CD8-positive, alpha-beta T cell (primary cell): ENCODE measurements at regions of chr9 and their contacts with region 1.

Region 1: GRCh38 chr9:128863647-128864046 is 18.1 kb downstream of the KYAT1 start:
- DNase-seq: peak; percentile 74 to 95 (median 86)
- ATAC-seq: peak; percentile 99
- H3K4me3 ChIP-seq: no peak overlapping the region
- H3K4me3 Mint-ChIP-seq: no peak overlapping the region
- H3K27ac ChIP-seq: no peak overlapping the region
- H3K27ac Mint-ChIP-seq: no peak overlapping the region
- H3K4me1 ChIP-seq: peaks cover 5% of the 10 kb centered on the region
- H3K4me1 Mint-ChIP-seq: peaks cover 5% of the 10 kb centered on the region
- H3K27me3 ChIP-seq: no peaks in the 10 kb centered on the region
- H3K27me3 Mint-ChIP-seq: no peaks in the 10 kb centered on the region
- CTCF ChIP-seq: peak; percentile 77

Region 2: DNA sequence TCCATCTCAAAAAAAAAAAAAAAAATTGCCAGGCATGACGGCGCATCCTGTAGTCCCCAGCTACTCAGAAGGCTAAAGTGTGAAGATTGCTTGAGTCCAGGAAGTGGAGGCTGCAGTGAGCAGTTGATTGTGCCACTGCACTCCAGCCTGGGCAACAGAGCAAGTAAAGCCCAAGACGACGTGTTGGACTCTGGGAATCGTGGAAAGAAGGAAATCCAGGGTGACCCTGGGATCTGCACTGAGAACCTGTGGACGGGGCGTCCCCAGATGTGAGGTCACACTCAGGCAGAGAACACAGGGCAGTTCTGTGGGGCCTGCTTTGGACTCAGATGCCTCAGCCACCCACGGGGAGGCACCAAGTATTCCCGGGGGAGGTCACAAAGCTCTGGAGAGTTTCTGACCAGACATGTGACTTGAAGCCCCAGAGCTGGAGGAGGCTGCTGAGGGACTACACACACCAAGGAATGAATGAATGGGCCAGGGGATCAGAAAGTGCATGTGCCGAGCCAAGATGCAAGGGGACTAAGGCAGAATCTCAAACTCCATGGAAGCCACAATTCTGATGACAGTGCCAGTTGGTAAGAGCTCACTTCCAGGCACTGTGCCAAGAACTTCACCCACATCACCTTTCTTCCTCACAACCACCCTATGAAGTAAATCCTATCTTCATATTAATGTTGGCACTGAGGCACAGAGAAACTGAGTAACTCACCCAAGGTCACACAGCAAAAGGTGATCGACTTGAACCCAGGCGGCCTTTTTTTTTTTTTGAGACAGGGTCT is 219.9 kb before region 1 on chr9:
- CTCF ChIA-PET with region 1: no interaction called
- POLR2A ChIA-PET with region 1: no interaction called
- intact Hi-C with region 1: loop called (anchors 1 kb)
- DNase-seq: no peak
- ATAC-seq: no peak
- H3K4me3 ChIP-seq: no peak overlapping the region
- H3K4me3 Mint-ChIP-seq: no peak overlapping the region
- H3K27ac ChIP-seq: no peak overlapping the region
- H3K27ac Mint-ChIP-seq: no peak overlapping the region
- H3K4me1 ChIP-seq: no peaks in the 10 kb centered on the region
- H3K4me1 Mint-ChIP-seq: no peaks in the 10 kb centered on the region
- H3K27me3 ChIP-seq: no peaks in the 10 kb centered on the region
- H3K27me3 Mint-ChIP-seq: no peaks in the 10 kb centered on the region
- CTCF ChIP-seq: no peak

Region 3: GRCh38 chr9:128747234-128747633 is 116.4 kb before region 1 on chr9:
- CTCF ChIA-PET with region 1: no interaction called
- POLR2A ChIA-PET with region 1: no interaction called
- intact Hi-C with region 1: no loop called
- DNase-seq: no peak
- ATAC-seq: no peak
- H3K4me3 ChIP-seq: no peak overlapping the region
- H3K4me3 Mint-ChIP-seq: no peak overlapping the region
- H3K27ac ChIP-seq: no peak overlapping the region
- H3K27ac Mint-ChIP-seq: no peak overlapping the region
- H3K4me1 ChIP-seq: no peaks in the 10 kb centered on the region
- H3K4me1 Mint-ChIP-seq: no peaks in the 10 kb centered on the region
- H3K27me3 ChIP-seq: no peaks in the 10 kb centered on the region
- H3K27me3 Mint-ChIP-seq: no peaks in the 10 kb centered on the region
- CTCF ChIP-seq: no peak

Region 4: GRCh38 chr9:128818099-128818838 is 45.4 kb before region 1 on chr9 and contains the start of gene ENDOG:
- CTCF ChIA-PET with region 1: interaction called, 3 read pairs
- POLR2A ChIA-PET with region 1: no interaction called
- intact Hi-C with region 1: loop called in 1 of 2 experiments (anchors 1 kb)
- DNase-seq: peak; percentile 94 to 98 (median 97)
- ATAC-seq: peak; percentile 96
- H3K4me3 ChIP-seq: peak within 1 kb of the TSS; percentile 59 to 75
- H3K4me3 Mint-ChIP-seq: peak within 1 kb of the TSS; percentile 91
- H3K27ac ChIP-seq: peak within 1 kb of the TSS; percentile 52 to 67
- H3K27ac Mint-ChIP-seq: peak within 1 kb of the TSS; percentile 87
- H3K4me1 ChIP-seq: peaks cover 12% of the 10 kb centered on the region
- H3K4me1 Mint-ChIP-seq: peaks cover 21% of the 10 kb centered on the region
- H3K27me3 ChIP-seq: no peaks in the 10 kb centered on the region
- H3K27me3 Mint-ChIP-seq: no peaks in the 10 kb centered on the region
- CTCF ChIP-seq: peak; percentile 98
- total RNA-seq, gene ENDOG: 6.2 to 6.4 TPM

Region 5: GRCh38 chr9:128892317-128892921 is 28.8 kb after region 1 on chr9:
- CTCF ChIA-PET with region 1: interaction called, 15 read pairs
- POLR2A ChIA-PET with region 1: interaction called, 3 read pairs
- intact Hi-C with region 1: no loop called
- DNase-seq: peak in 8 of 9 experiments; percentile 35 to 65 (median 48)
- ATAC-seq: peak; percentile 76
- H3K4me3 ChIP-seq: no peak overlapping the region
- H3K4me3 Mint-ChIP-seq: no peak overlapping the region
- H3K27ac ChIP-seq: peak overlapping the region in 1 of 2 experiments; percentile 68
- H3K27ac Mint-ChIP-seq: peak overlapping the region; percentile 45
- H3K4me1 ChIP-seq: peaks cover 54% of the 10 kb centered on the region
- H3K4me1 Mint-ChIP-seq: peaks cover 50% of the 10 kb centered on the region
- H3K27me3 ChIP-seq: no peaks in the 10 kb centered on the region
- H3K27me3 Mint-ChIP-seq: no peaks in the 10 kb centered on the region
- CTCF ChIP-seq: no peak

Region 6: GRCh38 chr9:128902351-128903078 is 38.9 kb after region 1 on chr9:
- CTCF ChIA-PET with region 1: interaction called, 5 read pairs
- POLR2A ChIA-PET with region 1: no interaction called
- intact Hi-C with region 1: loop called in 1 of 2 experiments (anchors 1 kb)
- DNase-seq: peak; percentile 71 to 95 (median 90)
- ATAC-seq: peak; percentile 93
- H3K4me3 ChIP-seq: peak overlapping the region; percentile 32 to 56
- H3K4me3 Mint-ChIP-seq: peak overlapping the region; percentile 81
- H3K27ac ChIP-seq: peak overlapping the region; percentile 87 to 92
- H3K27ac Mint-ChIP-seq: peak overlapping the region; percentile 91
- H3K4me1 ChIP-seq: peaks cover 69% of the 10 kb centered on the region
- H3K4me1 Mint-ChIP-seq: peaks cover 69% of the 10 kb centered on the region
- H3K27me3 ChIP-seq: no peaks in the 10 kb centered on the region
- H3K27me3 Mint-ChIP-seq: no peaks in the 10 kb centered on the region
- CTCF ChIP-seq: no peak

Region 7: GRCh38 chr9:129737479-129738274 is 874.0 kb after region 1 on chr9:
- CTCF ChIA-PET with region 1: no interaction called
- POLR2A ChIA-PET with region 1: no interaction called
- intact Hi-C with region 1: no loop called
- DNase-seq: peak; percentile 72 to 95 (median 87)
- ATAC-seq: peak; percentile 85
- H3K4me3 ChIP-seq: peak overlapping the region; percentile 72 to 92
- H3K4me3 Mint-ChIP-seq: peak overlapping the region; percentile 76
- H3K27ac ChIP-seq: peak overlapping the region; percentile 50 to 77
- H3K27ac Mint-ChIP-seq: peak overlapping the region; percentile 60
- H3K4me1 ChIP-seq: peaks cover 9% of the 10 kb centered on the region
- H3K4me1 Mint-ChIP-seq: peaks cover 6% of the 10 kb centered on the region
- H3K27me3 ChIP-seq: no peaks in the 10 kb centered on the region
- H3K27me3 Mint-ChIP-seq: peaks cover 2% of the 10 kb centered on the region
- CTCF ChIP-seq: peak; percentile 96